ENCODE measurements at regions of chr14 and their contacts with region 1.

Region 1: DNA sequence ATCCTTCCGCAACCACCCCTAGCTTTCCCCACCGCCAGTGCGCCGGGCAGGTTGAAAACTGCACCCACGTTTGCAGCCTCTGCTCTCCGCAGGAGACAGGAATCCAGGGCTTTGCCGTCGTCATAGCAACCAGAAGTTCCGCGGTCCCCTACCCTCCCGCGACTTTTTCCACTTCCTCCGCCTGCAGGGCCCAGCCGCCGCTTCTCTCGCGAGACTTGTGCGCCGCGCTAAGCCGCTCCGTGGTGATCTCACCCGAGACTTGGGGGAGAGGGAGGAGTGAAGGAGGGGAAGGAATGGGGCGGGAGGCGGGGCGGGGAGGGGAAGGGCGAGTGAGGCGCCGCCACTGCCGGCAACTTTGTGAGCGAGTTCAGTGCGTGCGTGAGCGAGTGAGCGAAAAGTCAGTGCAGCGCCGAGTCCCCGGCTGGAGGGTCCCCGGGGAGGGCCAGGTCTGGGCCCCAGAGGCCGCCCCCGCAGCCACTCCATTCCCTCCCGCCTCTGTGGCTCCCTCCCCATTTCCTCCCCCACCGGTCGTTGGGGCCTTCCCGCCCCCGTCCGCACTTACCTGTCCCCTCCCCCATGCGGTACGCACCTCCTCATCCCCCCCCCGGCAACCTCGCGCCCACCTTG is 413.0 kb downstream of the PCNX1 start:
- DNase-seq: peak; percentile 99
- H3K4me3 ChIP-seq: peak within 1 kb of the TSS; percentile 78 to 94 (median 89)
- H3K27ac ChIP-seq: peak within 1 kb of the TSS; percentile 74
- H3K4me1 ChIP-seq: peaks cover 11% of the 10 kb centered on the region
- H3K27me3 ChIP-seq: no peaks in the 10 kb centered on the region
- CTCF ChIP-seq: no peak
- POLR2A ChIP-seq: peak; percentile 91

Region 2: GRCh38 chr14:71290960-71291466 is 29.2 kb before region 1 on chr14:
- CTCF ChIA-PET with region 1: interaction called, 6 read pairs
- POLR2A ChIA-PET with region 1: no interaction called
- dilution Hi-C with region 1: no loop called
- intact Hi-C with region 1: loop called (anchors 2 kb)
- DNase-seq: peak; percentile 85
- H3K4me3 ChIP-seq: no peak overlapping the region
- H3K27ac ChIP-seq: no peak overlapping the region
- H3K4me1 ChIP-seq: no peaks in the 10 kb centered on the region
- H3K27me3 ChIP-seq: no peaks in the 10 kb centered on the region
- CTCF ChIP-seq: no peak
- POLR2A ChIP-seq: no peak

Region 3: DNA sequence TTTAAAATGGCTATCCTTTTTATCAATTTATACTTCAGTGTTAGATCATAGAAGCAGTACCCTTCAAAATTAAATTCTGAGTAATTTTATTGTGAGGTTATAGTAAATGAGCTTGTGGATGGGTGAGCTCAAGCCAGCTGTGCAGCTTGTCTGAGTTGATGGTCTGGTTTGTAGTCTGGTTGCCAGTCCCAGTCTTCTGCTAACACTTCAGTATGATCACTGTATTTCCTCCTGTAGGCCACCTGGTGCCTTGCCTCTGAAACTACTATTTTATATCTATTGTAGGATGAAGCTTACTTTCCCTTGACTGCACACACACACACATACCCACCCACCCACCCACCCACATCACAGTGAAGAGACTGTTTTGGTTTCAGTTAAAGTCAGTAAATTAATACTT is 83.4 kb after region 1 on chr14:
- CTCF ChIA-PET with region 1: interaction called, 26 read pairs
- POLR2A ChIA-PET with region 1: interaction called, 4 read pairs
- dilution Hi-C with region 1: no loop called
- intact Hi-C with region 1: loop called (anchors 2 kb)
- DNase-seq: no peak
- H3K4me3 ChIP-seq: no peak overlapping the region
- H3K27ac ChIP-seq: no peak overlapping the region
- H3K4me1 ChIP-seq: peaks cover 3% of the 10 kb centered on the region
- H3K27me3 ChIP-seq: no peaks in the 10 kb centered on the region
- CTCF ChIP-seq: no peak
- POLR2A ChIP-seq: no peak

Region 4: GRCh38 chr14:71574976-71575375 is 254.8 kb after region 1 on chr14:
- CTCF ChIA-PET with region 1: no interaction called
- POLR2A ChIA-PET with region 1: no interaction called
- dilution Hi-C with region 1: no loop called
- intact Hi-C with region 1: loop called (anchors 5 kb)
- DNase-seq: peak; percentile 42
- H3K4me3 ChIP-seq: no peak overlapping the region
- H3K27ac ChIP-seq: no peak overlapping the region
- H3K4me1 ChIP-seq: peaks cover 3% of the 10 kb centered on the region
- H3K27me3 ChIP-seq: no peaks in the 10 kb centered on the region
- CTCF ChIP-seq: no peak
- POLR2A ChIP-seq: no peak

Region 5: DNA sequence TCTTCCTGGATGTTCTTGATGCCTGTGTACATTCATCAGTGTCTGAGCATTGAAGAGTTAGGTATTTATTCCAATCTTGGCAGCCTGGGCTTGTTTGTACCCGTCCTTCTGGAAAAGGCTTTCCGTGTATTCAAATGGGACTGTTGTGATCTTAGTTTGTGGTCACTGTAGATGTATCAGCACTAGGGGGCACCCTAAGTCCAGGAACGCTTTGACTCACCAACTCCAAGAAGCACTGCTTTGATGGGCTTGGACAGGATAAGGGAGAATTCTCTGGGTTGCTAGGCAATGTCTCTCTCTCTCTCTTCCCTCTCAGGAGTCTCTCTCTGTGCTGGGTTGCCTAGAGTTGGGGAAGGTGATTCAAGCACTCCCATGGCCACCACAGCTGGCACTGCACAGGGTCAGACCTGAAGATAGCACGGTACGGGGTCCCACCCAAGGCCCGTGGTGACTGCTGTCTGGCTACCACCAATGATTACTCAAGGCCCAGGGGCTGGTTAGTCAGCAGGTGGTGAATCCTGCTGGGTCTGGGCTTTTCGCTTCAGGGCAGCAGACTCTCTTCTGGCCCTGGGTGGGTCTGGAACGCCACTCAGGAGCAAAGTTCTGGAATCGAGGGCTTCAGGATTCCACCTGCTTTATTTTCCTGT is 400.9 kb after region 1 on chr14:
- CTCF ChIA-PET with region 1: interaction called, 4 read pairs
- POLR2A ChIA-PET with region 1: no interaction called
- dilution Hi-C with region 1: no loop called
- intact Hi-C with region 1: loop called (anchors 2 kb)
- DNase-seq: peak; percentile 70
- H3K4me3 ChIP-seq: no peak overlapping the region
- H3K27ac ChIP-seq: no peak overlapping the region
- H3K4me1 ChIP-seq: no peaks in the 10 kb centered on the region
- H3K27me3 ChIP-seq: no peaks in the 10 kb centered on the region
- CTCF ChIP-seq: peak; percentile 70 to 72
- POLR2A ChIP-seq: no peak

Measured in endothelial cell of umbilical vein (primary cell).